ENCODE measurements at regions of chr1 and their contacts with region 1.

Region 1: GRCh38 chr1:185608177-185608576 is 126.0 kb upstream of the HMCN1 start:
- DNase-seq: no peak
- ATAC-seq: peak; percentile 83
- H3K4me3 Mint-ChIP-seq: no peak overlapping the region
- H3K27ac Mint-ChIP-seq: peak overlapping the region; percentile 26
- H3K4me1 Mint-ChIP-seq: peaks cover 63% of the 10 kb centered on the region
- H3K27me3 Mint-ChIP-seq: no peaks in the 10 kb centered on the region
- CTCF ChIP-seq: no peak

Region 2: DNA sequence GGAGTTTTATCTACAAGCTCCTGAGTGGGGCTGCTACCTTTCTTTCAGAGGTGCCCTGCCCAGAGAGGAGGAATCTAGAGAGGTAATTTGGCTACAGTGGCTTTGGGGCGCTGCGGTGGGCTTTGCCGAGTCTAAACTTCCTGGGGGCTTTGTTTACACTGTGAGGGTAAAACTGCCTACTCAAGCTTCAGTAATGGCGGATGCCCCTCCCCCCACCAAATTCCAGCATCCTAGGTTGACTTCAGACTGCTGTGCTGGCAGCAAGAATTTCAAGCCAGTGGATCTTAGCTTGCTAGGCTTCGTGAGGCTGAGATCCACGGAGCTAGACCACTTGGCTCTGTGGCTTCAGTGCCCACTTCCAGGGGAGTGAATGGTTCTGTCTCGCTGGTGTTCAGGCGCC is 407.3 kb before region 1 on chr1:
- CTCF ChIA-PET with region 1: no interaction called
- POLR2A ChIA-PET with region 1: interaction called, 11 read pairs
- intact Hi-C with region 1: no loop called
- DNase-seq: no peak
- ATAC-seq: no peak
- H3K4me3 Mint-ChIP-seq: no peak overlapping the region
- H3K27ac Mint-ChIP-seq: no peak overlapping the region
- H3K4me1 Mint-ChIP-seq: no peaks in the 10 kb centered on the region
- H3K27me3 Mint-ChIP-seq: no peaks in the 10 kb centered on the region
- CTCF ChIP-seq: no peak

Region 3: DNA sequence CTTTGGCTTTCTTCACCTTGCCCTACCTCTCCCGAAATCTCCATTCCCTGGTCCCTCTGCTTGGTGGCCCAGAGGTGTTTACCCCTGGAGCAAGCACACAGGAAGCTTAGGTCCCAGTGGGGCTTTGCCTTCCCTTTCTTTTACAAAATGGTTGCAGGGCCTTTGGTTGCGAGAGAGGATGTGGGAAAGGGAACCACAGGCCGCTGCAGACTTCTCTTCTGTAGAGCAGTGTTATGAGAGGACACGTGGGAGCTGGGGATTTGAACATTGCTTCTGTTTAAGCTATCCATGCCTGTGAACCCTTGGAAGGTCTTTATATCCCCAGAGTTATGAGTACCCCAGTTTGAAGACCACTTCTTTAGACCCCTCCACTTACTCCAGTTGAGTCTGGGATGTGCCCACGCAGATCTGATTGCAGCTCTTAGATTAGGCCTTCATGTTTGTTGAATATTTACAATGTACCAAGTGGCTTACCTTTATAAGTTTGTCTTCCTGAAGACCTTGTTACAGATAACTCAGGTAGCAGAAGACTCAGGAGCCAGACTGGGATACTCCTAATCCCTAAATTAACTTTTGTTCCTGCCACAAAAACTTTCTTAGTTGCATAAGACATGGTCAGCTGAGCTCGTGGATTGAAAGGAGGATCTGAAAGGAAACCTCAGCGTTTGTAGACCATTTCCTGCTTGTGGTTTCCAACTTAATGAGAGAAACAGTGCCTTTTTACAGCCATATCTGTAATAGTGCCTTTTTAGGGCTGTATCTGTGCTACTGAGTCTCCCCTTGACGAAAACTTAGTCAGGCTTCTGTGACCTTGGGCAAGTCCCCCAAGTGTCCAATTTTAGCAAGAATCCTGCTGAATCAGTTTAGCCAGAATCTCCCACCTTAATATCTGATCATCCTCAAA is 269.2 kb before region 1 on chr1:
- CTCF ChIA-PET with region 1: no interaction called
- POLR2A ChIA-PET with region 1: interaction called, 8 read pairs
- intact Hi-C with region 1: loop called (anchors 1 kb)
- DNase-seq: no peak
- ATAC-seq: peak; percentile 85
- H3K4me3 Mint-ChIP-seq: peak overlapping the region; percentile 71
- H3K27ac Mint-ChIP-seq: peak overlapping the region; percentile 95
- H3K4me1 Mint-ChIP-seq: peaks cover 35% of the 10 kb centered on the region
- H3K27me3 Mint-ChIP-seq: no peaks in the 10 kb centered on the region
- CTCF ChIP-seq: no peak

Region 4: DNA sequence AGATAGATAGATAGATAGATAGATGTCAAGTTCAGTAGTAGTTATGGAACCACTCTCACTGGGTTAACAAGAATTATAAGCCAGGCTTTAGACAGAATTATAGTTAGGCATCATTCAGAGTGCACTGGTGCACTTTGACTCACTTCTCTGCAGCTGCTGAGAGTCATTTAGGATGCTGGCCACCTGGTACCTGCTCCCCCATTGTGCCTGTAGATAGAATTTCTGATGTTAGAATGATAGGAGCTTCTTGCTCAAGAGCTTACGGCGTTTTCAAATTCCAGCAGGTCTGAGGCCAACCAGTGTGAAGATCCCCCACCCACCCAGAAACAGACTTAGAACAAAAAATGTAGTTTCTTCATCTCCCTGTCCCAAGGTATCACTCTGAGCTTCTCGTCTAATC is 18.2 kb after region 1 on chr1:
- CTCF ChIA-PET with region 1: no interaction called
- POLR2A ChIA-PET with region 1: no interaction called
- intact Hi-C with region 1: no loop called
- DNase-seq: no peak
- ATAC-seq: no peak
- H3K4me3 Mint-ChIP-seq: no peak overlapping the region
- H3K27ac Mint-ChIP-seq: no peak overlapping the region
- H3K4me1 Mint-ChIP-seq: peaks cover 7% of the 10 kb centered on the region
- H3K27me3 Mint-ChIP-seq: no peaks in the 10 kb centered on the region
- CTCF ChIP-seq: no peak

Region 5: DNA sequence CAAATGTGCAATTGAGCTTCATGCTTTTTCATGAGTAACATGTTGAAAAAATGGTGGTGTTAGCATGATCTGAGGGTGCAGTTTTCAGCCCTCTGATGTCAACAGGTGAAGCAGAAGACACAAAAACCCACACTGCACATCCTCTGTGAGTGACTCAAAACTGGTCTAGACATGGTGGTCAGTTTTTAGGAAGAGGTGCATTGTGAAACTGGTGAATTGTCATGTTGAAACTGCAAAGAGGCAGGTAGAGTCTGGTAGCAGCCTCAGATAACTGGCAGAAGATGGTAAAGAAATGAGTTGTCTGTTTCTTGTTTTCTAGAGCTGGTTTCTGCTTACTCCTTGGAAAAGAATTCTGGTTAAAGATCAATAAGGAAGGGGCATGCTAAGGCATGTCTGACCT is 28.7 kb after region 1 on chr1:
- CTCF ChIA-PET with region 1: no interaction called
- POLR2A ChIA-PET with region 1: interaction called, 12 read pairs
- intact Hi-C with region 1: loop called (anchors 1 kb)
- DNase-seq: no peak
- ATAC-seq: peak; percentile 87
- H3K4me3 Mint-ChIP-seq: no peak overlapping the region
- H3K27ac Mint-ChIP-seq: peak overlapping the region; percentile 46
- H3K4me1 Mint-ChIP-seq: peaks cover 25% of the 10 kb centered on the region
- H3K27me3 Mint-ChIP-seq: no peaks in the 10 kb centered on the region
- CTCF ChIP-seq: no peak

Measured in activated B cell treated with CpG ODN at 0.5 μM for 24 hours (primary cell).